Right ventricle myocardium inferior (tissue), 1 donor: ENCODE measurements at regions of chr15 and their contacts with region 1.

Region 1: DNA sequence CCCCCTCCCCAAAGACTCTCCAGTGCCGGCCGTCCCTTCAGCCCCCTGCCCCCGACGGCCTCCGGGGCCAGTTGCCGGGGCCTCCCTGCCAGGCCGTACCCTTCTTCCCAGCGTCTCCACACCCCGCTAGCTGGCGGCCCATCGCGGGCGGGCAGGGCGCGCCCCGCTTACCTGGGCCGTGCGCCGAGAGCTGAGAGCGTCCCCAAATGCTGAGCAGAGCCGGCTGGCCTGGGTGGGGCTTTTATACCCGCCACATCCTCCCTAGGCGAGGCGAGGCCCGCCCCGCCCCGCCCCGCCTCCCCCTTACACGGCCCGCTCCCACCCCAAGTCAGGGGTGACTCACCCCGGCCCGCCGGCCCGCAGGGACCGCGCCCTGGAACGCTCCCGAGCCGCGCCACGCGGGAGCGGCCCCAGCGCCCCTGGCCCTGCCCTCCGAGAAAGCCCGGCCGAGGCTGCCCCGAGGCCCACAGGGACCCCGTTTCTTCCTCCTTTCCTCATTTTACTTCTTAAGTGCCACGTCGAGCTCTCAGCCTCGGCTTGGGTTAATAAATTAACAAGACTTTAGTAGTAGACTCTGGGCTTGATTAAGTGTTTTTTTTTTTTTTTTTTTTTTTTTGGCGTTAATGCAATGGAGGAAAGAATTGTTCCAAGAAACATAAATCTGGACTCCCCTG is at the start of gene ANXA2:
- DNase-seq: peak; percentile 90
- ATAC-seq: peak; percentile 88
- total RNA-seq, gene ANXA2: 212 TPM

Region 2: DNA sequence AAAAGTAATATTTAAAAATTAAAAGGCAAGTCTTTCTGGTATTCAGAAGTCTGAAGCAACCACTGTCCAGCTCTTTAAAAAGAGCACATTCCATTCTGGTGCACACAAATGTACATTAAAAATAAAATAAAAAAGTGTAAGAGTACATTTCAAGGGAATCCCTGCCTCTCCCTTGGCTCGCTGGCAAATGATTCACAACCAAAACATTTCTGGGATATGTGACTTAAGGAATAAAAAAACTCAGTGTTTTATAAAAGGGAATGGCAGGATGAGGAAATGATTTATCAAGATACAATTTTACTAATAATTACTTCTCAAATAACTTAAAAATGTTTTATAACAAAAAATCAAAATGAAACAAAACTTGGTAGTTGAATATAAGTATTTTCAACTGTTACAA is 23.6 kb after region 1 on chr15:
- intact Hi-C with region 1: loop called (anchors 2 kb)
- DNase-seq: no peak
- ATAC-seq: no peak